GM12878 (cell line): ENCODE measurements at regions of chr9 and their contacts with region 1.

Region 1: GRCh38 chr9:6412487-6413364 is at the start of gene UHRF2:
- DNase-seq: peak; percentile 93
- ATAC-seq: peak; percentile 90
- H3K4me3 ChIP-seq: peak within 1 kb of the TSS; percentile 86
- H3K27ac ChIP-seq: peak within 1 kb of the TSS; percentile 86
- H3K4me1 ChIP-seq: peaks cover 12% of the 10 kb centered on the region; the same call in 1 of the 2 replicates
- H3K27me3 ChIP-seq: no peaks in the 10 kb centered on the region
- CTCF ChIP-seq: no peak
- EP300 ChIP-seq: peak in 1 of 2 experiments; percentile 71; a peak in 3 of 4 replicates
- POLR2A ChIP-seq: peak; percentile 96
- RAD21 ChIP-seq: 0 out of 2 replicates have a peak, but pooled peaks have one; percentile 13
- polyA plus RNA-seq, gene UHRF2: 11.2 to 14.2 TPM

Region 2: GRCh38 chr9:6133346-6134063 is 279.2 kb before region 1 on chr9:
- CTCF ChIA-PET with region 1: no interaction called
- POLR2A ChIA-PET with region 1: no interaction called
- RAD21 ChIA-PET with region 1: no interaction called
- SMC1A ChIA-PET with region 1: no interaction called
- in situ Hi-C with region 1: no loop called
- intact Hi-C with region 1: no loop called
- DNase-seq: peak; percentile 69
- ATAC-seq: peak; percentile 93
- H3K4me3 ChIP-seq: no peak overlapping the region
- H3K27ac ChIP-seq: no peak overlapping the region; the same call in 1 of the 2 replicates
- H3K4me1 ChIP-seq: peaks cover 15% of the 10 kb centered on the region
- H3K27me3 ChIP-seq: no peaks in the 10 kb centered on the region
- CTCF ChIP-seq: no peak
- EP300 ChIP-seq: no peak
- POLR2A ChIP-seq: no peak
- RAD21 ChIP-seq: no peak

Region 3: GRCh38 chr9:6428940-6429889 is 16.5 kb after region 1 on chr9:
- CTCF ChIA-PET with region 1: interaction called, 15 read pairs
- POLR2A ChIA-PET with region 1: interaction called, 22 read pairs
- RAD21 ChIA-PET with region 1: interaction called, 22 read pairs
- SMC1A ChIA-PET with region 1: interaction called, 69 read pairs
- in situ Hi-C with region 1: no loop called
- intact Hi-C with region 1: no loop called
- DNase-seq: peak; percentile 49
- ATAC-seq: peak; percentile 93
- H3K4me3 ChIP-seq: no peak overlapping the region
- H3K27ac ChIP-seq: peak overlapping the region; percentile 55
- H3K4me1 ChIP-seq: peaks cover 54% of the 10 kb centered on the region
- H3K27me3 ChIP-seq: no peaks in the 10 kb centered on the region
- CTCF ChIP-seq: no peak
- EP300 ChIP-seq: peak in 1 of 2 experiments; percentile 59; a peak in 1 of 4 replicates
- POLR2A ChIP-seq: no peak
- RAD21 ChIP-seq: no peak

Region 4: GRCh38 chr9:6439051-6439703 is 26.5 kb after region 1 on chr9:
- CTCF ChIA-PET with region 1: interaction called, 15 read pairs
- POLR2A ChIA-PET with region 1: interaction called, 3 read pairs
- RAD21 ChIA-PET with region 1: interaction called, 4 read pairs
- SMC1A ChIA-PET with region 1: interaction called, 17 read pairs
- in situ Hi-C with region 1: no loop called
- intact Hi-C with region 1: no loop called
- DNase-seq: no peak
- ATAC-seq: no peak
- H3K4me3 ChIP-seq: no peak overlapping the region
- H3K27ac ChIP-seq: no peak overlapping the region
- H3K4me1 ChIP-seq: no peaks in the 10 kb centered on the region
- H3K27me3 ChIP-seq: no peaks in the 10 kb centered on the region
- CTCF ChIP-seq: no peak
- EP300 ChIP-seq: no peak
- POLR2A ChIP-seq: no peak
- RAD21 ChIP-seq: no peak

Region 5: GRCh38 chr9:6460189-6460768 is 47.6 kb after region 1 on chr9:
- CTCF ChIA-PET with region 1: interaction called, 3 read pairs
- POLR2A ChIA-PET with region 1: no interaction called
- RAD21 ChIA-PET with region 1: interaction called, 8 read pairs
- SMC1A ChIA-PET with region 1: interaction called, 21 read pairs
- in situ Hi-C with region 1: no loop called
- intact Hi-C with region 1: no loop called
- DNase-seq: no peak
- ATAC-seq: no peak; the same call in 2 of the 3 replicates
- H3K4me3 ChIP-seq: no peak overlapping the region
- H3K27ac ChIP-seq: no peak overlapping the region
- H3K4me1 ChIP-seq: no peaks in the 10 kb centered on the region
- H3K27me3 ChIP-seq: no peaks in the 10 kb centered on the region
- CTCF ChIP-seq: no peak
- EP300 ChIP-seq: no peak
- POLR2A ChIP-seq: no peak
- RAD21 ChIP-seq: no peak

Region 6: DNA sequence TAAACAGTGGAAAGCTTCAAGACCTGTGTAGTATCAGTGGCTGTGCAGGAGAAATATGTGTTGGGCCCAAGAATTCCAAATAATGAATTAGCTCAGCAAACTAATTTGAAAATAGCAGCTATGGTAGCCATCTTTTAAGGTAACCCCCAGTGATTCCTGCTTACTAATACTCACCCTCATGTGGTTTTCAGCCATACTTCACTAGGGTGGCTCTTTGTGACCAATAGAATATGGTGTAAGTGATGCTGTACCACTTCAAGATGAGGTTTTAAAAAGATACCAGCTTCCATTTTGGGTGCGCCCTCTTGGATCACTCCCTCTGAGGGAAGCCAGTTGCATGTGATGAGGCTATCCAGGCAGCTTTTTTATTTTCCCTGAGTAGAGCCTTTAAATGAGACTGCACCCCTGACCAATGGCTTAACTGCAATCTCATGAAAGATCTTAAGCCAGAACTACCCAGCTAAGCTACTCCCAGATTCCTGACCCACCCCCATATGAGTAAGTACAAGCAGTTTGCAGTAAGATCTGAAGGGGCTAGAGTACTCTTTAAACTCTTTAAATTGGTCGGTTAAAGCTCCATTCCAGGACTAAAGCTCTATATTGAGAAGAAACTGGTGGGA is 58.6 kb after region 1 on chr9:
- CTCF ChIA-PET with region 1: interaction called, 3 read pairs
- POLR2A ChIA-PET with region 1: interaction called, 5 read pairs
- RAD21 ChIA-PET with region 1: interaction called, 4 read pairs
- SMC1A ChIA-PET with region 1: interaction called, 10 read pairs
- in situ Hi-C with region 1: no loop called
- intact Hi-C with region 1: loop called (anchors 5 kb)
- DNase-seq: no peak
- ATAC-seq: peak; percentile 60
- H3K4me3 ChIP-seq: no peak overlapping the region
- H3K27ac ChIP-seq: no peak overlapping the region
- H3K4me1 ChIP-seq: no peaks in the 10 kb centered on the region
- H3K27me3 ChIP-seq: no peaks in the 10 kb centered on the region
- CTCF ChIP-seq: no peak
- EP300 ChIP-seq: no peak
- POLR2A ChIP-seq: no peak
- RAD21 ChIP-seq: no peak

Region 7: DNA sequence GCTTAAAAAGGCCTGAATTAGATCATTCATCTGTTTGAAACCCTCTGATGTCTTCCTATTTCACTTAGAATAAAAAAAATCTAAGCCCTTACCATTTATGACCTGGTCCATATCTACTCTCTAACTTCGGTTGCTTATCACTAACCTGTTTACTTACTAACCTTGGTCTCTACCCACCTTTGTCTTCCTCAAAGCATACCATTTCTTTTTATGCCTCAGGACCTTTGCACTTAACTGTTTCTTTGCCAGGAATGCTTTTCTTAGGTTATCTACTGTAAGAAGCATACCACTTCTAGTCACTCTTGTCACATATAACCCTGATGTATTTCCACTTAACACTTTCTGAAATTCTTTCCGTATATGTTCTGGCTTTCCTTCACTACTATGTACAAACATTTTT is 67.2 kb after region 1 on chr9:
- CTCF ChIA-PET with region 1: no interaction called
- POLR2A ChIA-PET with region 1: no interaction called
- RAD21 ChIA-PET with region 1: interaction called, 4 read pairs
- SMC1A ChIA-PET with region 1: interaction called, 4 read pairs
- in situ Hi-C with region 1: no loop called
- intact Hi-C with region 1: loop called (anchors 5 kb)
- DNase-seq: no peak
- ATAC-seq: no peak
- H3K4me3 ChIP-seq: no peak overlapping the region
- H3K27ac ChIP-seq: no peak overlapping the region
- H3K4me1 ChIP-seq: no peaks in the 10 kb centered on the region
- H3K27me3 ChIP-seq: no peaks in the 10 kb centered on the region
- CTCF ChIP-seq: no peak
- EP300 ChIP-seq: no peak
- POLR2A ChIP-seq: no peak
- RAD21 ChIP-seq: no peak

Region 8: DNA sequence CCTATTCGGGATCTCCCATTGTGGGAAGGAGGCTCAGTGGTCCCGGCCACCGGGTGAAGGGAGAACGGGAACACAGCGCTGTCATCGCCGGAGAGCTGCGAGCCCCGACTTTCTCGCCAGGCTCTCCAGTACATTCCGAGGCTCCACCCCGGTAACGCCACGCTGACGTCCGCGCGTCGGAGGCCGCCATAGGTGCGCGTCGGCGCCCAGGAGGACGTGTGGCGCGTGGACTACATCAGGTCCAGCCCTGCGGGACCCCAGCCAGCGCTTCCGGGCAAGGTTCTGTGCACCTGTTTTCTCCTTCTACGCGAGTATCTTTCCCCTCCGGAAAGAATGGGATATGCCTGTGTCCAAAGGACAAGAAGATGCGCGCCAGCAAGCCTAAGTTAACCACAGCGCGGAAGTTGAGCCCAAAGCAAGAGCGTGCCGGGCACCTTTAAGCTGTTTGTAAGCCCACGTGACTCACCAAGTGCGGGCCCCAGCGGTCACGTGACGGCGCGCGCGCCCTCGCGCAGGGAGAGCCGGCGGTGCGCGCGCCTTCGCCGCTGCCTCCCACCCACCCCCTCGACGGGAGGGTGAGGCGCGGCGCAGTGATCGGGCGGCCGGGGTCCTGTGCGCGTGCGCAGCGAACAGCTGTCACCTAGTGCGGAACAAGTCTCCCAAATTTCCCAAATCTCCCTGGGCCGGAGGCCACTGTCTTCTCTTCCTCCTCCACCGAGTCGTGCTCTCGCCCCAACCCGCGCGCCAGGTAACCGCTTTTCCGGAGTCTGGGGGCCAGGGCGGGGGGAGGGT is 344.9 kb after region 1 on chr9 and contains the start of gene KDM4C:
- CTCF ChIA-PET with region 1: no interaction called
- POLR2A ChIA-PET with region 1: no interaction called
- RAD21 ChIA-PET with region 1: no interaction called
- SMC1A ChIA-PET with region 1: no interaction called
- in situ Hi-C with region 1: no loop called
- intact Hi-C with region 1: loop called (anchors 2 kb)
- DNase-seq: peak; percentile 88
- ATAC-seq: peak; percentile 89
- H3K4me3 ChIP-seq: peak within 1 kb of the TSS; percentile 76
- H3K27ac ChIP-seq: peak within 1 kb of the TSS; percentile 96
- H3K4me1 ChIP-seq: peaks cover 6% of the 10 kb centered on the region
- H3K27me3 ChIP-seq: no peaks in the 10 kb centered on the region
- CTCF ChIP-seq: no peak
- EP300 ChIP-seq: peak in 1 of 2 experiments; percentile 54; a peak in 2 of 4 replicates
- POLR2A ChIP-seq: peak; percentile 95
- RAD21 ChIP-seq: no peak
- polyA plus RNA-seq, gene KDM4C: 6.8 to 11.7 TPM